ENCODE measurements at regions of chr12 and their contacts with region 1.

Region 1: GRCh38 chr12:82082501-82082900 is 275.7 kb downstream of the CCDC59 start:
- DNase-seq: no peak
- ATAC-seq: no peak
- H3K4me3 ChIP-seq: no peak overlapping the region
- H3K4me3 Mint-ChIP-seq: no peak overlapping the region
- H3K27ac ChIP-seq: no peak overlapping the region
- H3K27ac Mint-ChIP-seq: no peak overlapping the region
- H3K4me1 ChIP-seq: no peaks in the 10 kb centered on the region
- H3K4me1 Mint-ChIP-seq: no peaks in the 10 kb centered on the region
- H3K27me3 ChIP-seq: no peaks in the 10 kb centered on the region
- H3K27me3 Mint-ChIP-seq: no peaks in the 10 kb centered on the region
- CTCF ChIP-seq: no peak

Region 2: GRCh38 chr12:81800298-81801148 is 282.0 kb before region 1 on chr12:
- CTCF ChIA-PET with region 1: no interaction called
- POLR2A ChIA-PET with region 1: no interaction called
- intact Hi-C with region 1: no loop called
- DNase-seq: no peak
- ATAC-seq: no peak
- H3K4me3 ChIP-seq: no peak overlapping the region
- H3K4me3 Mint-ChIP-seq: no peak overlapping the region
- H3K27ac ChIP-seq: no peak overlapping the region
- H3K27ac Mint-ChIP-seq: no peak overlapping the region
- H3K4me1 ChIP-seq: no peaks in the 10 kb centered on the region
- H3K4me1 Mint-ChIP-seq: no peaks in the 10 kb centered on the region
- H3K27me3 ChIP-seq: no peaks in the 10 kb centered on the region
- H3K27me3 Mint-ChIP-seq: no peaks in the 10 kb centered on the region
- CTCF ChIP-seq: no peak

Region 3: GRCh38 chr12:81835783-81836182 is 246.7 kb before region 1 on chr12:
- CTCF ChIA-PET with region 1: no interaction called
- POLR2A ChIA-PET with region 1: no interaction called
- intact Hi-C with region 1: no loop called
- DNase-seq: no peak
- ATAC-seq: no peak
- H3K4me3 ChIP-seq: no peak overlapping the region
- H3K4me3 Mint-ChIP-seq: no peak overlapping the region
- H3K27ac ChIP-seq: no peak overlapping the region
- H3K27ac Mint-ChIP-seq: no peak overlapping the region
- H3K4me1 ChIP-seq: no peaks in the 10 kb centered on the region
- H3K4me1 Mint-ChIP-seq: no peaks in the 10 kb centered on the region
- H3K27me3 ChIP-seq: no peaks in the 10 kb centered on the region
- H3K27me3 Mint-ChIP-seq: no peaks in the 10 kb centered on the region
- CTCF ChIP-seq: no peak

Region 4: GRCh38 chr12:82144505-82144904 is 62.0 kb after region 1 on chr12:
- CTCF ChIA-PET with region 1: no interaction called
- POLR2A ChIA-PET with region 1: no interaction called
- intact Hi-C with region 1: loop called (anchors 2 kb)
- DNase-seq: no peak
- ATAC-seq: no peak
- H3K4me3 ChIP-seq: no peak overlapping the region
- H3K4me3 Mint-ChIP-seq: no peak overlapping the region
- H3K27ac ChIP-seq: no peak overlapping the region
- H3K27ac Mint-ChIP-seq: no peak overlapping the region
- H3K4me1 ChIP-seq: no peaks in the 10 kb centered on the region
- H3K4me1 Mint-ChIP-seq: no peaks in the 10 kb centered on the region
- H3K27me3 ChIP-seq: no peaks in the 10 kb centered on the region
- H3K27me3 Mint-ChIP-seq: no peaks in the 10 kb centered on the region
- CTCF ChIP-seq: no peak

Measured in B cell (primary cell).